GM10248 (cell line): ENCODE measurements at regions of chr11 and their contacts with region 1.

Region 1: GRCh38 chr11:61516675-61517572 is 8.4 kb downstream of the LRRC10B start:
- DNase-seq: peak; percentile 88
- CTCF ChIP-seq: peak; percentile 94

Region 2: GRCh38 chr11:61446211-61446651 is 70.7 kb before region 1 on chr11:
- CTCF ChIA-PET with region 1: interaction called, 196 read pairs
- POLR2A ChIA-PET with region 1: no interaction called
- DNase-seq: peak; percentile 77
- CTCF ChIP-seq: peak; percentile 88

Region 3: GRCh38 chr11:61486771-61487170 is 30.2 kb before region 1 on chr11:
- CTCF ChIA-PET with region 1: interaction called, 168 read pairs
- POLR2A ChIA-PET with region 1: no interaction called
- DNase-seq: no peak
- CTCF ChIP-seq: no peak

Region 4: GRCh38 chr11:61503212-61503770 is 13.6 kb before region 1 on chr11:
- CTCF ChIA-PET with region 1: interaction called, 39 read pairs
- POLR2A ChIA-PET with region 1: no interaction called
- DNase-seq: no peak
- CTCF ChIP-seq: no peak

Region 5: GRCh38 chr11:61532139-61533038 is 15.5 kb after region 1 on chr11:
- CTCF ChIA-PET with region 1: interaction called, 41 read pairs
- POLR2A ChIA-PET with region 1: no interaction called
- DNase-seq: peak; percentile 85
- CTCF ChIP-seq: peak; percentile 87

Region 6: DNA sequence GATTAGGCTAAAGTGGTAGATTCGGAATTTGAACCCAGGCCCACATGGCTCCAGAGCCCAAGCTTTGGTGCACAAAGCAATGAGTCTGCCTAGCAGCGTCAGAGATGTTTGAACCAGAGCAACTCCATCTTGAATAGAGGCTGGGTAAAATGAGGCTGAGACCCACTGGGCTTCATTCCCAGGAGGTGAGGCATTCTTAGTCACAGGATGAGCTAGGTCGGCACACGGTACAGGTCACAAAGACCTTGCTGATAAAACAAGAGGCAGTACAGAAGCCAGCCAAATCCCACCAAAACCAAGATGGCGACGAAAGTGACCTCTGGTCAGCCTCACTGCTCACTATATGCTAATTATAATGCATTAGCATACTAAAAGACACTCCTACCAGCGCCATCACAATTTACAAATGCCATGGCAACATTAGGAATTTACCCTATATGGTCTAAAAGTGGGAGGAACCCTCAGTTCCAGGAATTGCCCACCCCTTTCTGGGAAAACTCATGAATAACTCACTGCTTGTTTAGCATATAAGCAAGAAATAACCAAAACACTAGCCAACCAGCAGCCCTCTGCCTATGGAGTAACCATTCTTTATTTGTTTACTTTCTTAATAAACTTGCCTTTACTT is 123.0 kb after region 1 on chr11:
- CTCF ChIA-PET with region 1: interaction called, 16 read pairs
- POLR2A ChIA-PET with region 1: no interaction called
- DNase-seq: no peak
- CTCF ChIP-seq: no peak